ENCODE measurements at regions of chr10 and their contacts with region 1.

Region 1: GRCh38 chr10:129030996-129031843 is 435.8 kb upstream of the MGMT start:
- DNase-seq: peak; percentile 26
- H3K4me3 Mint-ChIP-seq: no peak overlapping the region
- H3K27ac Mint-ChIP-seq: no peak overlapping the region
- H3K4me1 Mint-ChIP-seq: no peaks in the 10 kb centered on the region
- H3K27me3 Mint-ChIP-seq: no peaks in the 10 kb centered on the region
- CTCF ChIP-seq: no peak

Region 2: GRCh38 chr10:128981881-128982615 is 49.2 kb before region 1 on chr10:
- CTCF ChIA-PET with region 1: no interaction called
- intact Hi-C with region 1: no loop called
- DNase-seq: no peak
- H3K4me3 Mint-ChIP-seq: no peak overlapping the region
- H3K27ac Mint-ChIP-seq: no peak overlapping the region
- H3K4me1 Mint-ChIP-seq: no peaks in the 10 kb centered on the region
- H3K27me3 Mint-ChIP-seq: no peaks in the 10 kb centered on the region
- CTCF ChIP-seq: no peak

Region 3: GRCh38 chr10:129854158-129854557 is 822.9 kb after region 1 on chr10:
- CTCF ChIA-PET with region 1: interaction called, 12 read pairs
- intact Hi-C with region 1: no loop called
- DNase-seq: no peak
- H3K4me3 Mint-ChIP-seq: no peak overlapping the region
- H3K27ac Mint-ChIP-seq: no peak overlapping the region
- H3K4me1 Mint-ChIP-seq: no peaks in the 10 kb centered on the region
- H3K27me3 Mint-ChIP-seq: no peaks in the 10 kb centered on the region
- CTCF ChIP-seq: no peak

Region 4: GRCh38 chr10:129971381-129972144 is 940.3 kb after region 1 on chr10:
- CTCF ChIA-PET with region 1: no interaction called
- intact Hi-C with region 1: loop called (anchors 10 kb)
- DNase-seq: peak; percentile 10
- H3K4me3 Mint-ChIP-seq: no peak overlapping the region
- H3K27ac Mint-ChIP-seq: no peak overlapping the region
- H3K4me1 Mint-ChIP-seq: no peaks in the 10 kb centered on the region
- H3K27me3 Mint-ChIP-seq: no peaks in the 10 kb centered on the region
- CTCF ChIP-seq: no peak

Measured in Calu3 (cell line).